Activated CD4-positive, alpha-beta T cell treated with anti-CD3 and anti-CD28 coated beads, Interleukin-2, amount 10 ng/mL, durations not matched to agents 7 days and 5 days (primary cell): ENCODE measurements at regions of chr10 and their contacts with region 1.

Region 1: DNA sequence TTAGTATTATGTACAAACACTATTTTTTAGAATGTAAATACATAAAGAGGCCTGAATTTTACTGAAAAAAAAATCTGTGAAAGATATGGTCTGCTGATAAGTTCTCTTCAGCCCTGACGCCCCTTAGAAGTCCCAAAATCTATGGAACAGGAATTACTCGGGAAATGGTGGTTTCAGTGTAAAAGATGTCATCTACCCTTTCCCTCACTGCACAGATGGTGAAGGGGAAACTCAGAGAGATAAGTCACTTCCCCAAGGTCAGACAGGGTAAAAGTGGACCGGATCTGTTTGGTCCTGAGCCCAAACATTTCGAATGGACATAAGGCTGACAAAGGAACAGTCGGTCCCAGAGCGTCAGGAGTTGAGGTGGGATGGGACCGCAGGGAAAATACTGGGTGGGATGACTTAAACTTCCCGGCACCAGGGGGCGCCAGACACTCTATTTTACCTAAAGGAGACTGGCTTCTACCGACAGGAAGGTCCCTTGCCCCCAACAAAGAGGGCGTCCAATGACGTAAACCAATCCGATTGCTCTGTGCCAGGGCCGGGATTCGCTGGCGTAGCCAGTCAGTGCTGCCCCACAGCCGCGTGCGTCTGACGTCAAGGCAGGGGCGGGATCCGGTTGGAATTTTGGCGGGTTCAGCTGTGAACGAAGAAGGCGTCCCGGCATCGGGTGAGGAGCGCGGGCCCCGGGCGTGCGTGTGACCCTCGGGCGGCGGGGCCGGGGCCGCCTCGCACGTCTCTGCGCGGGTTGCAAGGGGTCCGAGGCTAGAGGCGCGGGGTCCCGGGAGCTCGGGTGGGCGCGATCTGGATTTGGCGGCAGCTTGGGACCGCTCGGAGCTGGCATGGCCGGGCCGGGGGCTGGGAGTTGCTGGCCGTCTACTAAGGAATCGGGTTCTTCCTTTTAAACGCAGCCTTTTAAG is at the start of gene MCM10:
- DNase-seq: peak; percentile 99
- H3K4me3 Mint-ChIP-seq: peak within 1 kb of the TSS; percentile 92
- H3K27ac Mint-ChIP-seq: peak within 1 kb of the TSS; percentile 90
- H3K4me1 Mint-ChIP-seq: peaks cover 46% of the 10 kb centered on the region
- H3K27me3 Mint-ChIP-seq: no peaks in the 10 kb centered on the region
- total RNA-seq, gene MCM10: 57.4 to 65.4 TPM

Region 2: GRCh38 chr10:12884380-12884779 is 276.8 kb before region 1 on chr10:
- CTCF ChIA-PET with region 1: no interaction called
- POLR2A ChIA-PET with region 1: no interaction called
- DNase-seq: no peak
- H3K4me3 Mint-ChIP-seq: no peak overlapping the region
- H3K27ac Mint-ChIP-seq: no peak overlapping the region
- H3K4me1 Mint-ChIP-seq: no peaks in the 10 kb centered on the region
- H3K27me3 Mint-ChIP-seq: peaks cover 13% of the 10 kb centered on the region

Region 3: DNA sequence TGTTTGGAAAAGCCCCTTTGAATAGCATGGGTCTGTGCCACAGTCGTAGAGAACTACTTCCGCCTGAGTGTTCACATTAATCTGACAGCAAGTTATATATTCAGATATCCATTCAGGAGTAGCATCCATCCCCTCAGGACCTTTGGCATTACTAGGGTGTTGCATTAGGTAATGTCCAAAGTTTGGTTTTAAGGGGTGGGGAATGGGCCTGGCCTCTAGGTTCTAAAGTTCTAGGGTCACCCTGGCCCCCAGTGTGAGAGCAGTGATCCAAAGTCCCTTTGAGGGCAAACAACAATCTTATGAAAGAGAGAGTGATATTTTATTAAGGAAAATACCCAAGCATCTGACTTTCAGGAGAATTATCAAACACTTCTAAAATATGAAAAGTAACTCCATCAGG is 12.4 kb after region 1 on chr10:
- CTCF ChIA-PET with region 1: interaction called, 17 read pairs
- POLR2A ChIA-PET with region 1: no interaction called
- DNase-seq: no peak
- H3K4me3 Mint-ChIP-seq: no peak overlapping the region
- H3K27ac Mint-ChIP-seq: no peak overlapping the region
- H3K4me1 Mint-ChIP-seq: no peaks in the 10 kb centered on the region
- H3K27me3 Mint-ChIP-seq: no peaks in the 10 kb centered on the region